CD4-positive, alpha-beta T cell (primary cell): ENCODE measurements at regions of chr15 and their contacts with region 1.

Region 1: DNA sequence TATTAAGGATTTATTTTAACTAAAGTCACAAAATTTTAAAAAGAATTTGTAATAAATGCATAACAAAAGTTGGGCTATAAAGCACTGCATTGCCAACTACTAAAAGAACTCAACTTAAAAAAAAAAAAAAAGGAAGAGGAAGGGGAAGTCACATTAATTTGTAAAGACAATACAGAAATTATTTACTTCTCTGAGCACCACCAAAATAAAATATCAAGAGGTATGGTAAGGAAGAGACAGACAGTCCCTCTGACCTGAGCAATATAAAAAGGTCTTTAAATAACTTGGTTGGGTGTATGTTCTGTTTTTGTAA is 83.5 kb downstream of the UACA start:
- DNase-seq: no peak
- ATAC-seq: no peak
- H3K4me3 ChIP-seq: no peak overlapping the region
- H3K4me3 Mint-ChIP-seq: no peak overlapping the region
- H3K27ac ChIP-seq: no peak overlapping the region
- H3K27ac Mint-ChIP-seq: no peak overlapping the region
- H3K4me1 ChIP-seq: no peaks in the 10 kb centered on the region
- H3K4me1 Mint-ChIP-seq: peaks cover 4% of the 10 kb centered on the region
- H3K27me3 ChIP-seq: peaks cover 0 to 3% of the 10 kb centered on the region in 2 experiments
- H3K27me3 Mint-ChIP-seq: peaks cover 19% of the 10 kb centered on the region
- CTCF ChIP-seq: peak; percentile 34

Region 2: DNA sequence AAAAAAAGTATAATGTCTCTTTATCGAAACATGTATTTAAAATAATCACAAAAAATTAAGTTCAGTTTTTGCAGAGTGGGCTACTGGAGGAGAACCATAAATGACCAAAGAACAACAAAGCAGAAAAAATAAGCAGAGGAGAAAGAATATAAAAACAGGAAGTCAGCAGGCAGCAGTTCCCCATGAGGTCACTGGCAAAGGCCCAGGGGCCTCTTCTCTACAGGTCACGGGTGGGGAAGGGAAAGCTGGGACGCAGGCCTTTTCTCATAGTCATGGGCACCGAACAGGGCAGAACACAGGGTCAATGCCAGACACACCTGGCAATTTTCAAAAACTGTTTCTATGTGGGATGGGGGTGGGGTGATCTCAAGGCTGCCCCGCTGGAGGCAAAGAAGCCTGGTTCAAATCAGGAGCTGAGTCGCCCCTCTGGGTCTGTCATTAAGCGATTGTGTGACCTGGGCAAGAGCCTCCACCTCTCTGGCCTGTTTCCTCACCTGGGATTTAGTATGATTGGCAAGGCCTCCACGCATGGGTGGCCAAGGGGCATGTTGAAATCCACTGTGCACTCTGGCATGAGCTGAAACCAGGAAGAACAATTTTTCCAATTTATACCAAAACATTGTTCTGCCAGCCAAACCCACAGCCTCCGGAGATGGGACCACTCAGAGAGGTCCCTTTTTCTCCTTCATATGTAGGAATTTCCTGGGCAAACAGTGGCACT is 127.3 kb after region 1 on chr15:
- CTCF ChIA-PET with region 1: no interaction called
- POLR2A ChIA-PET with region 1: no interaction called
- intact Hi-C with region 1: loop called (anchors 1 to 2 kb)
- DNase-seq: peak in 3 of 14 experiments; percentile 3 to 38 (median 19)
- ATAC-seq: no peak
- H3K4me3 ChIP-seq: no peak overlapping the region
- H3K4me3 Mint-ChIP-seq: no peak overlapping the region
- H3K27ac ChIP-seq: no peak overlapping the region
- H3K27ac Mint-ChIP-seq: no peak overlapping the region
- H3K4me1 ChIP-seq: no peaks in the 10 kb centered on the region
- H3K4me1 Mint-ChIP-seq: no peaks in the 10 kb centered on the region
- H3K27me3 ChIP-seq: peaks cover 3 to 4% of the 10 kb centered on the region in 2 experiments
- H3K27me3 Mint-ChIP-seq: peaks cover 13% of the 10 kb centered on the region
- CTCF ChIP-seq: no peak

Region 3: DNA sequence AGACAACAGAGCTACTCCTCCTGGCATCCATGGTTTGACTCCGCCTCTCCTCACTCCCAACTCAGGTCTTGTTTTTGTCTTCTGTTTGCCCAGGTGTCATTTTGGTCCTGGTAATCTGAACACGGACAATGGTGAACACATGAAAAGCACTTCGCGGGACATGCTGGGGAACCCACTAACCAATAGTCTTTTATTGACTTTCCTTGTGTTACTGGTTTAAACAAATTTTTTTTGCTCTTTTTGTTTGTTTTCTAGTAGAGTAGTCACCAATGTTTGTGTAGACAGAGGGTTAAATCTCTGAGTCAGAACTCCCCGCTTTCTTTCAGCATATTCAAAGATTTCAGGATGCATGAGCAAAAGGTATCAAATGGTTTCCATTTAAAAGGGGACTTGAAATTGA is 135.8 kb after region 1 on chr15:
- CTCF ChIA-PET with region 1: no interaction called
- POLR2A ChIA-PET with region 1: no interaction called
- intact Hi-C with region 1: loop called (anchors 1 to 2 kb)
- DNase-seq: no peak
- ATAC-seq: no peak
- H3K4me3 ChIP-seq: no peak overlapping the region
- H3K4me3 Mint-ChIP-seq: no peak overlapping the region
- H3K27ac ChIP-seq: no peak overlapping the region
- H3K27ac Mint-ChIP-seq: no peak overlapping the region
- H3K4me1 ChIP-seq: no peaks in the 10 kb centered on the region
- H3K4me1 Mint-ChIP-seq: no peaks in the 10 kb centered on the region
- H3K27me3 ChIP-seq: peaks cover 3 to 4% of the 10 kb centered on the region in 2 experiments
- H3K27me3 Mint-ChIP-seq: peaks cover 6% of the 10 kb centered on the region
- CTCF ChIP-seq: no peak